Posterior cingulate gyrus (tissue), 11 donors: ENCODE measurements at regions of chr9 and their contacts with region 1.

Region 1: GRCh38 chr9:19174127-19174912 is 47.0 kb upstream of the PLIN2 start:
- DNase-seq: peak in 2 of 10 donors; percentile 11 to 15

Region 2: GRCh38 chr9:18638371-18639249 is 535.7 kb before region 1 on chr9:
- intact Hi-C with region 1: no loop called
- DNase-seq: no peak

Region 3: DNA sequence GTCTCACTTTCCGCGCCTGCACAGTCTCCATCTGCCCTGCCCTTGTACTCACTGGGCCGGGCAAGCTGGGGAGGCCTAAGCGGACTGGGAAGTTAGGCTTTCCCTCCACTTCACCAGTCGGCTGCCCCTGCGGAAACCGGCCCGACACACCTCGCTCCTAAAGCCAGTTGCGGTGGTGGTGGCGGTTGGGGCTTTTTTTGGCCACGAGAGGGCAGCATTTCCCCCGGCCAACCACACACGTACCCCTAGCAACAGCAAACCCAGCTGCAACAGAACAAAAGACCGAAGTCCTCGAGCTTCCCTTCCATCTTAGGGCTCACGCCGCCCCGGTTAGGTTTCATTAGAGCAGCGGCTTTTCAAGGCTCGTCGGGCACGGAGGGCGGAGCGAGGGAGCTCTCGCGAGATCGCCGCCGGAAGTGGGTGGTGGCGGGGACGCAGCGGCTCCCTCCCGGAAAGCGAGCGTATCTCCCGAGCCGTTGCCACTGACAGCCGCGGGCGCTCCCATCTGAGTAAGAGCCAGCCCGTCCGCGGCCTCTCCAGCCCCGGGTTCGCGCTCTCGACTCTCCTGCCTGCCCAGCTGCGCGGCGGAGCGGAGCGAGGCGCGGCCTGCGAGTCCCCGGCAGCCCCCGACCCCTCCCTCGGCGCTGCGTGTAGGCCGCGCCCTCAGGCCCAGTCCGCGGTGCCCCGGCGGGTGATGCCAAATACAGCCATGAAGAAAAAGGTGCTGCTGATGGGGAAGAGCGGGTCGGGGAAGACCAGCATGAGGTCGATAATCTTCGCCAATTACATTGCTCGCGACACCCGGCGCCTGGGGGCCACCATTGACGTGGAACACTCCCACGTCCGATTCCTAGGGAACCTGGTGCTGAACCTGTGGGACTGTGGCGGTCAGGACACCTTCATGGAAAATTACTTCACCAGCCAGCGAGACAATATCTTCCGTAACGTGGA is 125.1 kb before region 1 on chr9 and contains the start of gene RRAGA:
- intact Hi-C with region 1: loop called (anchors 1 kb)
- DNase-seq: peak; percentile 87 to 99 (median 93)

Region 4: GRCh38 chr9:19127881-19128500 is 46.3 kb before region 1 on chr9:
- intact Hi-C with region 1: loop called (anchors 10 kb)
- DNase-seq: peak in 2 of 10 donors; percentile 16 to 19

Region 5: GRCh38 chr9:19230356-19231125 is 56.2 kb after region 1 on chr9 and contains the start of gene DENND4C:
- intact Hi-C with region 1: no loop called
- DNase-seq: peak; percentile 66 to 97 (median 80)